ENCODE measurements at regions of chr17 and their contacts with region 1.

Region 1: GRCh38 chr17:38729886-38730525 is at the start of gene CISD3:
- DNase-seq: peak; percentile 96
- ATAC-seq: peak; percentile 81
- H3K4me3 Mint-ChIP-seq: peak within 1 kb of the TSS; percentile 93
- H3K27ac Mint-ChIP-seq: peak within 1 kb of the TSS; percentile 93
- H3K4me1 Mint-ChIP-seq: peaks cover 53% of the 10 kb centered on the region
- H3K27me3 Mint-ChIP-seq: no peaks in the 10 kb centered on the region
- total RNA-seq, gene CISD3: 30.4 to 37.3 TPM

Region 2: DNA sequence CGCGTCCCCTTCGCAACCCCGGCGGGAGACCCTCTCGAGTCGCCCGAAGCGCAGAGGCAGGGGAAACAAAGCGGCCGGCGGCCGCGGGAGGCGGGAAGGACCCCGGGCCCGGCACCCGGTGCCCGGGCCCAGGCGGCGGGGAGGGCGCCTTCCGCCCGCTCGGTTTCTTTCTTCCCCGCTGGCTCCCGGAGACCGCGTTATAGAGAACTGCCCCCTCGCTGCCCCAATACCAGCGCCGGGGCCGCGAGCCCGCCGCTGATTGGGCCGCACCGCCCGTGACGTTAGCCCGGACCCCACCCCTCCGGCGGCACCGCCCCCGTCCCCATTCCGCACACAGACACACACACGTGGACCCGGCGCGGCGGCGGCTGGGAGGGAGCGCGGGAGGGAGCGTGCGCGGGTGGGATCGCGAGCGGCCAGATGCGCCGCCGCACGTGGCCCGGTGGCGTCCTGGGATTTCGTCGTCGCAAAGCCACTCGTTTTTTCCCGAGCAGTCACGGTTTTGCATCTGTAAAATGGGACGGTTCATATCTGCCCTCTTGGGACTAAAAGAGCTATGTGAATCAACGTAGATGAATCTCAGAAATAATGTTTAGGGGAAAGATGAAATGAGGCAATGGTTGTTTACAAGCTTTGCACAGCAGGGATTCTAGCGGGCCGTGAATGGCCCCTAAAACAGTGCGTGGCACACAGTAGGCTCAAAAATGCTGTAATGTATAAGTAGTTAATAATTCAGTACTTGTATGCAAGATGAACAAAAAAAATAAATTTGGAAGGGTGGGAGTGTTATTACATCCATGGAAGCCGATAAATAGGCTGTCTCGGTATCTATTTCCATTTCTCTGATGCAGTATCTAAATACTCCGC is 55.0 kb before region 1 on chr17 and contains the start of gene EPOP:
- POLR2A ChIA-PET with region 1: interaction called, 32 read pairs
- DNase-seq: peak; percentile 92
- ATAC-seq: peak; percentile 88
- H3K4me3 Mint-ChIP-seq: peak within 1 kb of the TSS; percentile 68
- H3K27ac Mint-ChIP-seq: peak within 1 kb of the TSS; percentile 33
- H3K4me1 Mint-ChIP-seq: peaks cover 31% of the 10 kb centered on the region
- H3K27me3 Mint-ChIP-seq: peaks cover 24% of the 10 kb centered on the region
- total RNA-seq, gene EPOP: 7.2 TPM

Region 3: DNA sequence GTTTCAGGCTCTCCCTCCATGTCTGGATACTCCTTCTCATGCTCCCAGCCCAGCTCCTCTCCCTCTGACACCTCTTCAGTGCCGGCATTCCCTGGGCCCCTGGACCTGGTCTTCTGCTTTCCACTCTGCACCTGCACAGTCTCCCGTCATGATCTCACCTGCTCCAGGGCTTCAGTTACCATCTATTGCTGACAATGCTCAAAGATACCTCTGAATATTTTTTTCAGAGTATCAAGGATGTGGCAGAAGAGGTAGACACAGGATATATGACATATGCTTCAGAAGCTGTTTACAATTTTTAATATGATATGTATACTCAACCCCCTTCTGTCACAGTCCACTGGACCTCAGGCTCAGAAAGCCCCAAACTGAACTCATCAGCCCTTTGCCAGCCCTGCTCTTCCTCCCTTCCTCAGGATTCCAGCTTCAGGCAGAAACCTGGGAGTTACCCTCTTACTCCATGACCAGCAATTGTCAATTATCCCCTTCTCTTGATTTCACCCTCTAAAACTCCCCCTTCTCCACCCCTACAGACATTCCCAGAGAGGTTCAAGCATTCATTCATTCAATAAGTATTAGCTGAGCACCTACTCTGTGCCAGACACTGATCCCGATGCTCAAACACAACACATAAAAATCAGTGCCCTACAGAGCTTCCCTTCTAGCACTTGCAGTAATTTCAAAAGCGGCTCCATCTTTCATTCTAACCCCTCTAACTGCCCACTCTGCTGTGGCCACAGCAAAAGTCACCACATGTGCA is 32.8 kb before region 1 on chr17:
- POLR2A ChIA-PET with region 1: interaction called, 25 read pairs
- DNase-seq: no peak
- ATAC-seq: peak; percentile 19
- H3K4me3 Mint-ChIP-seq: peak overlapping the region; percentile 29
- H3K27ac Mint-ChIP-seq: peak overlapping the region; percentile 69
- H3K4me1 Mint-ChIP-seq: peaks cover 35% of the 10 kb centered on the region
- H3K27me3 Mint-ChIP-seq: no peaks in the 10 kb centered on the region

Region 4: GRCh38 chr17:38702166-38702899 is 27.7 kb before region 1 on chr17:
- POLR2A ChIA-PET with region 1: interaction called, 111 read pairs
- DNase-seq: peak; percentile 85
- ATAC-seq: peak; percentile 40
- H3K4me3 Mint-ChIP-seq: peak overlapping the region; percentile 96
- H3K27ac Mint-ChIP-seq: peak overlapping the region; percentile 97
- H3K4me1 Mint-ChIP-seq: peaks cover 28% of the 10 kb centered on the region
- H3K27me3 Mint-ChIP-seq: no peaks in the 10 kb centered on the region

Region 5: DNA sequence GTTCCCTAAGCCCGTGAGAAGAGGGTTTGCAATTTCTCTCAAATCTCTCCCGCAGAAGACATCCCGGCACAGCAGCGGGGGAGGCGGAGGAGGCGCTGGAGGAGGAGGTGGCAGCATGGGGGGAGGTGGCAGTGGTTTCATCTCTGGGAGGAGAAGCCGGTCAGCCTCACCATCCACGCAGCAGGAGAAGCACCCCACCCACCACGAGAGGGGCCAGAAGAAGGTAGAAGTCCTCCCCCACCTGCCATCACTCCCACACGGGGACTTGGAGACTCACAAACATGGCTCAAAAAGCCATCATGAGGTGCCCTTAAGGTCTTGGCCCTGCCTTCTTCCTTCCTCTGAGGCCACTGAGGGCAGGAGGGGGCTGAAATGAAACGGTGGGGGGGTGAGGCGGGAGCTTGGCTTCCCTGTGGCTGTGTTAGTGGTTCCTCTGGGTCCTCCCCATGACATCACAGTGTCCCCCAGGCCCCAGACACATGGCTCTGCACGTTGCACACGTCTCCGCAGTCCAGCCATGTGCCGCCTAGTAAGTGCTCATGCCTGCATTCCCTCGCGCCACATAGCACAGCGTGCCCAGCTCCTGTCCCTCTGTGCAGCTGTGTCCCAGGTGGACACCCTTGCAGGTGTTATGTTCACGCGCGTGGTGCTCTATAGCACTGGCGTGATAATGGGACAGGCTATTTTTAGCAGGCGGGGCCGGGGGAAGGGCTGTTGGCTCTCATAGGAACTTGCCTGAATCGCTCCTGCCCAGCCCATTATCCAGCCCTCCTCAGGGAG is 18.0 kb before region 1 on chr17:
- POLR2A ChIA-PET with region 1: interaction called, 111 read pairs
- DNase-seq: no peak
- ATAC-seq: no peak
- H3K4me3 Mint-ChIP-seq: no peak overlapping the region
- H3K27ac Mint-ChIP-seq: peak overlapping the region; percentile 63
- H3K4me1 Mint-ChIP-seq: peaks cover 52% of the 10 kb centered on the region
- H3K27me3 Mint-ChIP-seq: no peaks in the 10 kb centered on the region